GM12878 (cell line): ENCODE measurements at regions of chr1 and their contacts with region 1.

Region 1: DNA sequence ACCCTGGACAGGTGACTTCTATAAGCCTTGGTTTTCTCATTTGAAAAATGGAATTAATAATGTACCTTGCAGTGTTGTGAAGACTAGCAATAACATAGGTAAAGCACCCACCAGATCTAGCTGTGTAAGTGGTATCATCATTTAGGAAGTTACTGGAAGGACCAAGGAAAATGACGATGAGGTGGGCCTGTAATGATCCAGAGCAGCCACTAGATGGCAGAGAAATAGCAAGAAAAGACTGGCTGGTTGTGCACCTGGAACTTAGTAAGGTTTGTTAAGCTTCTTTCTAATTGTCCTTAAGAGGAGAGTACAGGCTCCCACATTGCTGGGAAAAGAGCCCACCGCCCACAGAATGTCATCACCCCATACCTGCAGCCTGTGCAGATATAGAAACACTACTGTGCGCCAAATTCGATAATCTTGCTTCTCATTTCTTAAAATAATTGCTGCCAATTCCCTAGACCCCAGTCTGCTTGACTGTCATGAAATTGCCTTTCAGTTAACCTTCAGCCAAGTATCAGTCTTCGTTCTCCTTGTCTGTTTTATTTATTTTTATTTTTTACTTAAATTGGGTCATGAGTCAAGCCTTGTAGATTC is 37.2 kb downstream of the WNT4 start:
- DNase-seq: no peak
- ATAC-seq: peak; percentile 82
- H3K4me3 ChIP-seq: no peak overlapping the region
- H3K27ac ChIP-seq: no peak overlapping the region
- H3K4me1 ChIP-seq: peaks cover 22% of the 10 kb centered on the region
- H3K27me3 ChIP-seq: no peaks in the 10 kb centered on the region
- CTCF ChIP-seq: peak; percentile 78 to 87 (median 79)
- EP300 ChIP-seq: no peak
- POLR2A ChIP-seq: no peak
- RAD21 ChIP-seq: peak; percentile 75

Region 2: GRCh38 chr1:22018583-22019559 is 86.8 kb before region 1 on chr1:
- CTCF ChIA-PET with region 1: interaction called, 10 read pairs
- POLR2A ChIA-PET with region 1: interaction called, 14 read pairs
- RAD21 ChIA-PET with region 1: interaction called, 3 read pairs
- SMC1A ChIA-PET with region 1: interaction called, 9 read pairs
- in situ Hi-C with region 1: no loop called
- intact Hi-C with region 1: no loop called
- DNase-seq: peak; percentile 80
- ATAC-seq: peak; percentile 94
- H3K4me3 ChIP-seq: no peak overlapping the region
- H3K27ac ChIP-seq: peak overlapping the region; percentile 49
- H3K4me1 ChIP-seq: peaks cover 14% of the 10 kb centered on the region
- H3K27me3 ChIP-seq: no peaks in the 10 kb centered on the region
- CTCF ChIP-seq: peak; percentile 44 to 54 (median 48); a peak in 5 of 6 replicates
- EP300 ChIP-seq: peak; percentile 20 to 71; a peak in 3 of 4 replicates
- POLR2A ChIP-seq: peak; percentile 62
- RAD21 ChIP-seq: peak; percentile 43

Region 3: DNA sequence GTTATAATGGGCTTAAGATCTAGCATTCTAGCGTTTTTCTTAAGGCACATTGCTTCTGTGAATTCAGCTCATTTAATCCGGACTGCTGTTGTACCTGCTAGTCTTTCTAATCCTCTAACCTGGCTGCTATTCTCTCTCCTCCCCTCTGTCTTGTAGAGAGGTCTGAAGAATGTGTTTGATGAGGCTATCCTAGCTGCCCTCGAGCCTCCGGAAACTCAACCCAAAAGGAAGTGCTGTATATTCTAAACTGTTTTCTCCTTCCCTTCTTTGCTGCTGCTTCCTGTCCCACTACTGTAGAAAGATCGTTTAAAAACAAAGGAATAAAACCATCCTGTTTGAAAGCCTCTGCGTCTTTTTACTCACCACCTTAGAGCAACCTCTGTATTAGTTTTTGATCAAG is 15.9 kb before region 1 on chr1:
- CTCF ChIA-PET with region 1: interaction called, 15 read pairs
- POLR2A ChIA-PET with region 1: no interaction called
- RAD21 ChIA-PET with region 1: no interaction called
- SMC1A ChIA-PET with region 1: interaction called, 6 read pairs
- in situ Hi-C with region 1: no loop called
- intact Hi-C with region 1: no loop called
- DNase-seq: no peak
- ATAC-seq: peak; percentile 21
- H3K4me3 ChIP-seq: no peak overlapping the region; the same call in 1 of the 2 replicates
- H3K27ac ChIP-seq: peak overlapping the region; percentile 29
- H3K4me1 ChIP-seq: peaks cover 27% of the 10 kb centered on the region
- H3K27me3 ChIP-seq: no peaks in the 10 kb centered on the region
- CTCF ChIP-seq: no peak
- EP300 ChIP-seq: no peak
- POLR2A ChIP-seq: no peak
- RAD21 ChIP-seq: no peak